ENCODE measurements at regions of chr2 and their contacts with region 1.

Region 1: DNA sequence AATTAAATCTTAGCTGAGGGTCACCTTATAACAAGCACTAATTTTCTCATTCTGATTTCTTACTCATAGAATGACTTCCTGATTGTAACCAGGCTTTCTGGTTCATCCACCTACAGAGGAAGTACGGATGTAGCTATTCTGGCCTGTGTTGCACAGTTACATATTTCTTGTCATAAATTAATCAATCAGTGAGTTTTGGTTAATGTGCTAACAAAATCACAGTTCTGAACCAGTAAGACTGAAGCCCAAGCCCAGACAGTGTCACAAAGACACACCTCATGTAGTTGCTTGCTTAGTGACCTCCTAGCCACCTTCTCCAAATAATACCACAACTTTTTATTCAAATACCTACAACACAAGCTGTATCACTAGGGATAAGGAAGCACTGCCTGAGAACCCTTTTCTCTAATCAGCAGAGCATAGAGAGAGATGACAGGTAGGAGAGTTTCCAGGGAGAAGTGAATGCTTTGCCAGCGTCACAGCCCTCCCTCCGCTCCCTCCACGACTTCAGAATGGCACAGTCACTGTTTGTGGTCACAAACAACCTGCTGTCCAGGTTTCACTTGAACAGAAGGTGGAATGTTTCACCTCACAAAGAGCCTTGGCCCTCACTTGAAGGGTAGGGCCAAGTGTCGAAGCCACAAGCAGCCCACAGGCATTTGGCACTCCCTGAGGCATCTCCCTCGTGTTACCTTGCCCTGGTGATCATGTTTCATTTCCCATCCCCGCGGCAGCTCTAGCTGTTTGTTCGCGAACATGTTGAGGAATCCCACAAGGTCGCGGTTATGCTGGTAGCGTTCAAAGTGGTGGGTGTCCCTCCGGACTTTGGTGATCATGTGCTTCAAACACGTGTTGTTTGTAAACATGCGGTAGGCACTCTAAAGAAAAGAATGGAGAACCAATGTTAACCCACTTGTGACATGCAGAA is 120.8 kb upstream of the STK17B start:
- DNase-seq: no peak
- H3K4me3 Mint-ChIP-seq: no peak overlapping the region
- H3K27ac Mint-ChIP-seq: no peak overlapping the region
- H3K4me1 Mint-ChIP-seq: peaks cover 46% of the 10 kb centered on the region
- H3K27me3 Mint-ChIP-seq: peaks cover 2% of the 10 kb centered on the region

Region 2: GRCh38 chr2:196314780-196315179 is 22.6 kb after region 1 on chr2:
- intact Hi-C with region 1: no loop called
- DNase-seq: no peak
- H3K4me3 Mint-ChIP-seq: no peak overlapping the region
- H3K27ac Mint-ChIP-seq: no peak overlapping the region
- H3K4me1 Mint-ChIP-seq: peaks cover 9% of the 10 kb centered on the region
- H3K27me3 Mint-ChIP-seq: peaks cover 13% of the 10 kb centered on the region

Region 3: GRCh38 chr2:196337208-196337953 is 45.2 kb after region 1 on chr2:
- intact Hi-C with region 1: loop called (anchors 5 kb)
- DNase-seq: no peak
- H3K4me3 Mint-ChIP-seq: no peak overlapping the region
- H3K27ac Mint-ChIP-seq: no peak overlapping the region
- H3K4me1 Mint-ChIP-seq: peaks cover 4% of the 10 kb centered on the region
- H3K27me3 Mint-ChIP-seq: peaks cover 14% of the 10 kb centered on the region

Region 4: DNA sequence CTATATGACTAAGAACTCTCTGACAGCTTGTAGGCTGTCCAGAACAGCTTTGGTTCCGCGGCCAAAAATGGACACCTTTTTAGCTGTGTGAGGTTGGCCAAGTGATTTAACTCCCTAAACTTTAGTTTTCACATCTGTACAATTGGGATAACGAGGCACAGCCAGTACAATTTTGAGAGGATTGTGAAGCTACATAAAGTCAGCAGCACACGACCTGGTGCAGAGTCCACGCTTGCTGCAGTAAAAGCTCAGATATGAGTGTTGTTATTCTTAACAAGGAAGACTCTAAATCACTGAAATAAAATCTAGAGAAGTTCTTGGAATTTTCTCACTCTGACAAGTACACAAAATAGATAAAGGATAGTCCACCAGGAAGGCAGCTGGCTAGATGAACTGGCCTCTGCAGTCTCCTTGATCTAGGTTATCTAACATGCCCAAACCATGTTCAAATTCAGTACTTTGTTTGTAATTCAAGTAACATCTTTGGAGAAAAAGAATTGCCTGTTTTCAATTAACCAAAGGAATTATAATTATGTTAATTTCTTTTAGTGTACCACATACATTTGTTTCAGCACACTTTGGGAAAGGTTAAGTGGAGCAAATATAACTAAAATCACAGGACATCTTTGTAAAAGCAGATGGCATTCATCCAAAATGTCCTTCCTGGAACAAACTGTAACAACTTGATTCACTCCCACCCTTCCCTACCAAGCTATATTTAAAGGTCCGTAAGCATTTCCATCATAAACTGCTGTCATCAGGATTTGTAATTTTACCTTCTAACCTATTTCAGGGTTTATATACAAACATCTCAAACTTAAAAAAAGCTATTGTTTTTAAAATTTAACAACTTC is 80.9 kb after region 1 on chr2:
- intact Hi-C with region 1: no loop called
- DNase-seq: no peak
- H3K4me3 Mint-ChIP-seq: no peak overlapping the region
- H3K27ac Mint-ChIP-seq: no peak overlapping the region
- H3K4me1 Mint-ChIP-seq: peaks cover 3% of the 10 kb centered on the region
- H3K27me3 Mint-ChIP-seq: peaks cover 2% of the 10 kb centered on the region